ENCODE measurements at regions of chr2 and their contacts with region 1.

Region 1: GRCh38 chr2:173965329-173966025 is at the start of gene SP3:
- DNase-seq: peak; percentile 94
- H3K4me3 Mint-ChIP-seq: peak within 1 kb of the TSS; percentile 93
- H3K27ac Mint-ChIP-seq: peak within 1 kb of the TSS; percentile 99
- H3K4me1 Mint-ChIP-seq: peaks cover 37% of the 10 kb centered on the region
- H3K27me3 Mint-ChIP-seq: no peaks in the 10 kb centered on the region
- total RNA-seq, gene SP3: 95.8 and 103 TPM in 2 replicates

Region 2: GRCh38 chr2:173286153-173286809 is 679.2 kb before region 1 on chr2:
- intact Hi-C with region 1: loop called (anchors 5 kb)
- DNase-seq: no peak
- H3K4me3 Mint-ChIP-seq: no peak overlapping the region
- H3K27ac Mint-ChIP-seq: peak overlapping the region; percentile 40
- H3K4me1 Mint-ChIP-seq: peaks cover 5% of the 10 kb centered on the region
- H3K27me3 Mint-ChIP-seq: no peaks in the 10 kb centered on the region

Region 3: GRCh38 chr2:173692068-173692467 is 273.4 kb before region 1 on chr2:
- intact Hi-C with region 1: no loop called
- DNase-seq: no peak
- H3K4me3 Mint-ChIP-seq: no peak overlapping the region
- H3K27ac Mint-ChIP-seq: no peak overlapping the region
- H3K4me1 Mint-ChIP-seq: no peaks in the 10 kb centered on the region
- H3K27me3 Mint-ChIP-seq: no peaks in the 10 kb centered on the region

Region 4: GRCh38 chr2:173982918-173983317 is 17.4 kb after region 1 on chr2:
- intact Hi-C with region 1: loop called (anchors 1 kb)
- DNase-seq: no peak
- H3K4me3 Mint-ChIP-seq: no peak overlapping the region
- H3K27ac Mint-ChIP-seq: no peak overlapping the region
- H3K4me1 Mint-ChIP-seq: peaks cover 30% of the 10 kb centered on the region
- H3K27me3 Mint-ChIP-seq: no peaks in the 10 kb centered on the region

Region 5: DNA sequence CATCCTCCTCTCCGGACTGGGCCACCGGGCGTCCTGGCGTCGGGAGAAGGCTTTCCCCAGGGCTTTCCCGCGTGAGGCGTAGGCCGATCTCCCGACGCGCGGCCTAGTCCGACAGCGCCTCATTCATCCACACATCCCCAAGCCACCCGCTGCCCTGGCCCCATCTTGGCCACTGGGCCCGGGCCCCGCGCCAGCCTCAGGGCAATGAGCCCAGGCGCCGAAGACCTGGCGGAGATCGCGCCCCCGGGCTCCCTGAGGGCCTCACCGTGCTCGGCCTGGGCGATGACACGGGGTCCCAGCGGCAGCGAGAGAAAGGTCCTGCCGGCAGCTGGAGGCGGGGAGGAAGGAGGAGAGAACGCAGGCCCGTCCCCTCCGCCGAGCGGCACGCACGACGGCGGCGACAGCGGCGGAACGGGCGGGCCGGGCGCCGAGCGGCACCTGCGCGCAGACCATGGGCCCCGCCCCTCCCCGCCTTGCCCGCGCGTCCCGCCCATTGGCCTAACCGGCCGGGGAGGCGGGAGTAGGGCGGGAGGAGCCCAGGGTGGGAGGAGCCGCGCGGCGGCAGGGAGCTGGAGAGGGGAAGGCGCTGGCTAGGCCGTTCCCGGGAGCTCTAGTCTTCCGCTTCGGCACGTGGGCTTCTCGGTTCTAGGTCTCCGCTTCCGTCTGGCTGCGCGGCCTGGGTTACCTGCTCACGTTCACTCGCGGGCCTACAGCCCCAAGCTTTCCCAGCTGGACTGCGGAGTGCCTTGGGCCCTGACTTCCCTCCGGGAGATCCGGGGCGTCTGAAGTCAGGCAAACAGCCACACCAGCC is 282.9 kb after region 1 on chr2 and contains the start of gene OLA1:
- intact Hi-C with region 1: loop called (anchors 1 kb)
- DNase-seq: peak; percentile 95
- H3K4me3 Mint-ChIP-seq: peak within 1 kb of the TSS; percentile 83
- H3K27ac Mint-ChIP-seq: peak within 1 kb of the TSS; percentile 79
- H3K4me1 Mint-ChIP-seq: peaks cover 26% of the 10 kb centered on the region
- H3K27me3 Mint-ChIP-seq: no peaks in the 10 kb centered on the region
- total RNA-seq, gene OLA1: 132 and 139 TPM in 2 replicates

Region 6: GRCh38 chr2:174487108-174487819 is 521.8 kb after region 1 on chr2:
- intact Hi-C with region 1: loop called (anchors 5 kb)
- DNase-seq: peak; percentile 88
- H3K4me3 Mint-ChIP-seq: peak overlapping the region; percentile 89
- H3K27ac Mint-ChIP-seq: peak overlapping the region; percentile 68
- H3K4me1 Mint-ChIP-seq: peaks cover 72% of the 10 kb centered on the region
- H3K27me3 Mint-ChIP-seq: no peaks in the 10 kb centered on the region

Region 7: DNA sequence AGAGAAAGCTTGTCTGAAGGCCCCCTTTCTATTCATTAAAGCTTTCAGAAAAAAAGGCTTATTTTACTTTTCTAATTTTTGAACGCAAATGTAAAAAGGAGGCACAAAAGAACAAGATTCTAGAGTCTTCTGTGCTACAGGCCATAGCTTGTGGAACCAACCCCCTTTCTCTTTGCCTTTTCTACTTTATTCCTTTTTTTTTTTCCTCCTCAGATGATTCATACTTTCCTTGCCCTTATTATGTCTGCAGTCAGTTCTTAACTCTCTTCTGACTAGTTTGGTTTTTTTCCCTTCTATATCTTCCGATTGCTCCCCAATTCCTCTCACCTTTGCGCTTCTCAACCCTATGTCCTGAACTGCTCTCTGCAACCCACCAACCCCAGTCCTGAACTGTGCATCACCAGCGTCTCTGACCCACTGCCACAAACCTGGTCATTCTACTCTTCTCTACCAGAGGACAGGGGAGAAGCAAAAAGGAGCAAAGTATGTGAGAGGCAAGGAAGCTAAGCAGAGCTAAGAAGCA is 689.0 kb after region 1 on chr2:
- intact Hi-C with region 1: no loop called
- DNase-seq: no peak
- H3K4me3 Mint-ChIP-seq: no peak overlapping the region
- H3K27ac Mint-ChIP-seq: peak overlapping the region; percentile 71
- H3K4me1 Mint-ChIP-seq: peaks cover 55% of the 10 kb centered on the region
- H3K27me3 Mint-ChIP-seq: no peaks in the 10 kb centered on the region